PC-9 (cell line): ENCODE measurements at regions of chr14 and their contacts with region 1.

Region 1: DNA sequence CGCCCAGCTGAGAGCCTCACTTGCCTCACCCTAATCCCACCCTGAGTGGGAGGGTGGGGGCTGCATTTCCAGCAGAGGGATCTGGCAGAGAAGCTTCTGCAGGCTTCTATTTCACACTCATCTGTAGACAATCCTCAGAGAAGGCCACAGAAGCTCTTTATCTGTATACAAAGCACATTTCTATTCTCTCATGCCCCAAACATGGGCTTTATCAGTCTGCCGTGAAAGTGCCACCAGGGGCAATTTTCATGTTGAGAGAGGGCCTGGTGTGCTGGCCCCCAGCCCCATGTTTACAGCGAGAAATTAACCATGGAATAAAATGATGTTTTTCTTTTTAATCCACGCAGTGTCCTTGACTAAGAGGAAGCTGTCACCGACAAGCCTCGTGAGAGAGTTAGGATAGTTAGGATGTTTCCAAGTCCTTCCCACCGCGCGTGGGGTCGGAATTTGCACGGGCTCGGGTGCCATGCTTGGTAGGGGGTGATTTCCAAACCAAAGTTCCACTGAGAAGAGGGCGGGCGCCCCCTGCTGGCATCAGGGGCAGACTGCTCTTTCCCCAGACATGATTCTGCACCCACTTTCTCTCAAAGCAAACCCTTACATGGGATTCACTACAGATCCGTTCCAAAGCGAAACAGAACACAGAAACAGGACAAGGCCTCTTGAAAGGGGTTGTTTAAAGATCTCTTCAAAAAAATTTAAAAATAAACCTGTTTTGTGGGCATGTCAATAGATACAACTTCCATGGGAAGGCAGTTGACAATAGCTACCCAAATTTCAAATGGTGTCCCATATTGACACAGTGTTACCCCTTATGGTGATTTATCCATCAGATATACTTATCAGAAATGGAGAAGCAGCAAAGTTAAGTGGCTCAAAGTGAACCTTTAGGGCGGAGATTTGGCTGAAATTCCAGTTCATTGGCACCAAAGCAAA is 19.4 kb downstream of the BDKRB1 start:
- DNase-seq: no peak
- H3K4me3 ChIP-seq: no peak overlapping the region
- H3K27ac ChIP-seq: no peak overlapping the region
- H3K4me1 ChIP-seq: peaks cover 16% of the 10 kb centered on the region
- H3K27me3 ChIP-seq: no peaks in the 10 kb centered on the region
- CTCF ChIP-seq: peak; percentile 92

Region 2: DNA sequence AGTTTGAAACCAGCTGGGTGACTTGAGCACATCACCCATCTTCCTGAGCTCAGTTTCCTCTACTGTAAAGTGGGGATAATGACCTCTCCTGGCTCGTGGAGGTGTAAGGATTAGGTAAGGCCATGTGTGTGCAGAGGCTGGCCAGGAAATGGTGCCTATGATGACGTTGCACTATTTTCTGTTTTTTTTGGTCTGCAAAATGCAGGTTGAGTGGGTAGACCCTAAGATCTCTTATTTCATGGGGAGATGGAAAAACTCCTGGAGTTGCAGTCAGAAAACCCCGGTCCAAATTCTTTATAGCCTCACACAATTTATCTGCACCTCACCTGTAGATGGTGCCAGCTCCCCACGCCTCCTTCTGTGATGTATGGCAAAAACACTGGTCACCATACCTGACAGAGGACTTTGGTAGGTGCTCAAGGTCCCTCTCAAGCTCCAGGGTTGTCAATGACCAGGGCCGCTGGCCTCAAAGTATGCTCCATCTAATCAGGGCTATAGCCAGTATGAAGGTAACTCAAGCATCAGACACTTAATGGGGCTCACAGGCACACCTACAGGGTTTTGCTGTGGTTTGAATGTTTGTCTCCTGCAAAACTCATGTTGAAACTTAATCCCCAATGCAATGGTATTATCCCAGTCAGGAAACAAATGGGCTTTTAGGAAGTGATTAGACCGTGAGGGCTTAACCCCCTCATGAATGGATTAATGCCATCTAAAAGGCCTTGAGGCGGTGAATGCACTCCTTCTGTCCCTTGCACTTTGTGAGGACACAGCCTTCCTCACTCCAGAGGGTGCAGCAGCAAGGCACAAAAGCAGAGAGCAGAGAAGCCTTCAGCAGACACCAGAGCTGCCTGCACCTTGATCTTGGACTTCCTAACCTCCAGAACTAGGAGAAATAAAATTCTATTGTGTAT is 218.7 kb before region 1 on chr14:
- CTCF ChIA-PET with region 1: no interaction called
- POLR2A ChIA-PET with region 1: no interaction called
- intact Hi-C with region 1: loop called (anchors 5 kb)
- DNase-seq: peak in 1 of 2 experiments; percentile 2
- H3K4me3 ChIP-seq: no peak overlapping the region
- H3K27ac ChIP-seq: no peak overlapping the region
- H3K4me1 ChIP-seq: 0 out of 2 replicates have a peak, but pooled peaks cover 3% of the 10 kb centered on the region
- H3K27me3 ChIP-seq: peaks cover 16% of the 10 kb centered on the region; the same call in 1 of the 2 replicates
- CTCF ChIP-seq: peak; percentile 68

Region 3: DNA sequence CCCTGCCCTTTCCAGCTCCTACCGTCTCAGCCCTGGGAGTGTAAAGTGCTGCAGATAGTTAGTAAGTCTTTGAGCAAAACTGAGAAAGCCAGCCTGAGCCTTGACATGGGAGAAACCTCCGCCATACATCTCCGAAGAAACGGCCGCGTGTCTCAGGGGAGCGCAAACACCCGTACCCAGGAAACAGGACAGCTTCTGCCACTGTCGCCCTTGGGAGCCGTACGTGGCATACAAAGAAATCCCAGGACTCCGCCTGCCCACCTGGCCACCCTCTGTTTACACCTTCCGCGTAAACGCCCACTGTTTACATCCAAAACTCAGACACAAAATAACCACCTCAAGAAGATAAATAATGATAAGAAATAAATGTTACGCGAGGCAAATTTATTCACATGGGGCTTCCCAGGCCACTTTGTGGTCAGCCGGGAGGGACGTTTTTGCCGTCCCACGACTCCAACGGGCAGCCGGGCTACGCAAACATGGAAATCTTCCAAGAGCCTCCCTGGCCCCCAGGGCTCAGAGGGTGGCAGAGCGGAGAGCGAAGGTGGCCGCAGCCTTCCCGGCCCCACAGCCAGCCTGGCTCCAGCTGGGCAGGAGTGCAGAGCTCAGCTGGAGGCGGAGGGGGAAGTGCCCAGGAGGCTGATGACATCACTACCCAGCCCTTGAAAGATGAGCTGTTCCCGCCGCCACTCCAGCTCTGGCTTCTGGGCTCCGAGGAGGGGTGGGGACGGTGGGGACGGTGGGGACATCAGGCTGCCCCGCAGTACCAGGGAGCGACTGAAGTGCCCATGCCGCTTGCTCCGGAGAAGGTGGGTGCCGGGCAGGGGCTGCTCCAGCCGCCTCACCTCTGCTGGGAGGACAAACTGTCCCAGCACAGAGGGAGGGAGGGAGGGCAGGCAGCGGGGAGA is 71.0 kb before region 1 on chr14 and contains the start of gene BDKRB2:
- CTCF ChIA-PET with region 1: no interaction called
- POLR2A ChIA-PET with region 1: no interaction called
- intact Hi-C with region 1: no loop called
- DNase-seq: peak; percentile 57 to 86
- H3K4me3 ChIP-seq: peak within 1 kb of the TSS; percentile 59
- H3K27ac ChIP-seq: peak within 1 kb of the TSS; percentile 68
- H3K4me1 ChIP-seq: peaks cover 40% of the 10 kb centered on the region
- H3K27me3 ChIP-seq: no peaks in the 10 kb centered on the region
- CTCF ChIP-seq: no peak
- total RNA-seq, gene BDKRB2: 0.28 and 0.43 TPM in 2 replicates

Region 4: GRCh38 chr14:96264853-96265252 is 10.6 kb before region 1 on chr14:
- CTCF ChIA-PET with region 1: no interaction called
- POLR2A ChIA-PET with region 1: no interaction called
- intact Hi-C with region 1: no loop called
- DNase-seq: no peak
- H3K4me3 ChIP-seq: no peak overlapping the region
- H3K27ac ChIP-seq: no peak overlapping the region
- H3K4me1 ChIP-seq: peaks cover 57% of the 10 kb centered on the region
- H3K27me3 ChIP-seq: no peaks in the 10 kb centered on the region
- CTCF ChIP-seq: peak; percentile 36; the same call in 1 of the 2 replicates